HCT116 (cell line): ENCODE measurements at regions of chr19 and their contacts with region 1.

Region 1: GRCh38 chr19:49546825-49547565 is 19.2 kb downstream of the RCN3 start:
- DNase-seq: peak; percentile 85
- ATAC-seq: peak; percentile 89
- H3K4me3 ChIP-seq: peak overlapping the region; percentile 29 to 45
- H3K27ac ChIP-seq: peak overlapping the region; percentile 53; the same call in 1 of the 2 replicates
- H3K4me1 ChIP-seq: peaks cover 3 to 14% of the 10 kb centered on the region in 2 experiments; a peak in 3 of 4 replicates
- H3K27me3 ChIP-seq: no peaks in the 10 kb centered on the region
- CTCF ChIP-seq: peak; percentile 70 to 94 (median 88)
- POLR2A ChIP-seq: no peak
- RAD21 ChIP-seq: peak; percentile 92

Region 2: GRCh38 chr19:49391581-49392399 is 155.2 kb before region 1 on chr19:
- CTCF ChIA-PET with region 1: interaction called, 17 read pairs
- POLR2A ChIA-PET with region 1: no interaction called
- RAD21 ChIA-PET with region 1: no interaction called
- intact Hi-C with region 1: loop called (anchors 1 kb)
- DNase-seq: peak; percentile 60
- ATAC-seq: peak; percentile 98
- H3K4me3 ChIP-seq: no peak overlapping the region
- H3K27ac ChIP-seq: no peak overlapping the region
- H3K4me1 ChIP-seq: peaks cover 3 to 10% of the 10 kb centered on the region in 2 experiments; a peak in 3 of 4 replicates
- H3K27me3 ChIP-seq: no peaks in the 10 kb centered on the region
- CTCF ChIP-seq: peak; percentile 91 to 97 (median 93)
- POLR2A ChIP-seq: no peak
- RAD21 ChIP-seq: peak; percentile 98

Region 3: DNA sequence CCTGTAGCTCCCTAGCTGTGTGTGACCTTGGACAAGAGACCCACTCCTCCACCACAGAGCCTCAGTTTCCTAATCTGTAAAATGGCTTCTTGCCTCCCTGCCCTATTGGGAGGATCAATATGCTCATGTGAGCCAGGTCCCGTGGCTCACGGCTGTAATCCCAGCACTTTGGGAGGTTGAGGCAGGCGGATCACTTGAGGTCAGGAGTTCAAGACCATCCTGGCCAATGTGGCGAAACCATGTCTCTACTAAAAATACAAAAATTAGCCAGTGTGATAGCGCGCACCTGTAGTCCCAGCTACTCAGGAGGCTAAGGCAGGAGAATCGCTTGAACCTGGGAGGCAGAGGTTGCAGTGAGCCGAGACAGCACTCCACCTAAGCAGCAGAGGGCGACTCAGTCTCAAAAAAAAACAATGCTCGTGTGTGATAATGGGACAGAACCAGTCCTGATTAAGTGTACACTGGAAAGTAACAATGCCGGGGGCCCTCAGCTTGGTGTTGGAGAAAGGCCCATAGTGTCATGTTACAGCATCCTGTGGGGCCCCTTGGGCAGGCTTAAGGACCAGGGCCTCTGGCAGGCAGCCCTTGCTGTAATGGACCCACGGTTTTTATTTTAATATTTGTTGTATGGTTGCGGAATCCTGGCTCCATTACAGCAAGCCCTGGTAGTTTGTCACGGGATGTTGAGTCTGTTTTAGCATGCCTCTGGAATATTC is 44.0 kb before region 1 on chr19:
- CTCF ChIA-PET with region 1: interaction called, 47 read pairs
- POLR2A ChIA-PET with region 1: interaction called, 4 read pairs
- RAD21 ChIA-PET with region 1: interaction called, 8 to 12 read pairs
- intact Hi-C with region 1: loop called (anchors 1 kb)
- DNase-seq: peak; percentile 54
- ATAC-seq: peak; percentile 60
- H3K4me3 ChIP-seq: no peak overlapping the region
- H3K27ac ChIP-seq: no peak overlapping the region; the same call in 1 of the 2 replicates
- H3K4me1 ChIP-seq: peaks cover 6 to 34% of the 10 kb centered on the region in 2 experiments
- H3K27me3 ChIP-seq: no peaks in the 10 kb centered on the region
- CTCF ChIP-seq: peak; percentile 61 to 80 (median 66)
- POLR2A ChIP-seq: no peak
- RAD21 ChIP-seq: peak; percentile 83

Region 4: GRCh38 chr19:49570138-49570856 is 23.3 kb after region 1 on chr19:
- CTCF ChIA-PET with region 1: interaction called, 29 read pairs
- POLR2A ChIA-PET with region 1: no interaction called
- RAD21 ChIA-PET with region 1: no interaction called
- intact Hi-C with region 1: no loop called
- DNase-seq: peak; percentile 83
- ATAC-seq: peak; percentile 77
- H3K4me3 ChIP-seq: no peak overlapping the region
- H3K27ac ChIP-seq: peak overlapping the region; percentile 47
- H3K4me1 ChIP-seq: peaks cover 44 to 61% of the 10 kb centered on the region in 2 experiments
- H3K27me3 ChIP-seq: no peaks in the 10 kb centered on the region
- CTCF ChIP-seq: peak; percentile 97 to 99 (median 99)
- POLR2A ChIP-seq: no peak
- RAD21 ChIP-seq: peak; percentile 87

Region 5: DNA sequence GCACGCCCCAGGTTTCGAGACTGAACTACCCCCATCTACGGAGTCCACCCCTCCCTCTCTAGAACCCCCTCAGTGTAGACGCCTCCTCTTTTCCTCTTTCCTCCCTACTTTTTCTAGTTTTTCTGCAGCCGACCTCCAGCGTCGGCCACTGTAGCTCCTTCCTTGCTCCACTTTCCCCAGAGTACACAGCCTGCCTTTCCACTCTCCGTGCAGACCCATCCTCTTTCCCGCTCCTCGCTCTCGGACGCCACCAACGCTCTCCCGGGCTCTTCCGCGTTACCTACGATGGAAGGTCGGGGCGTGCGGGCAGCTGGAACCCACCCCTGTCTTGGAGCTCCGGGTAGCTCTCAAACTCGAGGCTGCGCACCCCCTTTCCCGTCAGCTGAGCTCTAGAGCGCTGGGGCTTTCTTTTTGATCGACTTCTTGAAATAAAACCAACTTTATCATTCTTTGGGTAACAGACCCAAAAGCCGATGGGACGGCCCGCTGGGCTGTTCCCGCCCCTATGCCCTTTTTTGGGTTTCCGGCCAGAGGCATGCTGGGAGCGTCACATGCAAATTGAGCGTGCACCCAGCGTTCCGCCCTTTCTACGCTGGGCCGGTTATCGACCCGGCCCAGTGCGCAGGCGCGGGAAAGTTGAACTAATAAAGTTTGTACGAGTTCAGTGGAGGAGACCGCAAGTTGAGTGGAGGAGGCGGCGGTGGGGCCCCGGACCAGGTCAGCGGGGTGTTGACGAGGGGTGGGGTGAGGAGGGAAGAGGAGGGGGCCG is 118.5 kb after region 1 on chr19 and contains the starts of genes BCL2L12 and IRF3:
- CTCF ChIA-PET with region 1: no interaction called
- POLR2A ChIA-PET with region 1: no interaction called
- RAD21 ChIA-PET with region 1: no interaction called
- intact Hi-C with region 1: no loop called
- DNase-seq: peak; percentile 88
- ATAC-seq: peak; percentile 75
- H3K4me3 ChIP-seq: peak within 1 kb of the TSS; percentile 90 to 95
- H3K27ac ChIP-seq: peak within 1 kb of the TSS; percentile 95
- H3K4me1 ChIP-seq: peaks cover 6 to 30% of the 10 kb centered on the region in 2 experiments; a peak in 3 of 4 replicates
- H3K27me3 ChIP-seq: no peaks in the 10 kb centered on the region
- CTCF ChIP-seq: no peak
- POLR2A ChIP-seq: no peak
- RAD21 ChIP-seq: no peak
- total RNA-seq, gene BCL2L12: 93.9 TPM
- total RNA-seq, gene IRF3: 129 TPM